CD8-positive, alpha-beta T cell (primary cell): ENCODE measurements at regions of chr22 and their contacts with region 1.

Region 1: GRCh38 chr22:30634471-30635233 is 929 bp upstream of the SLC35E4 start:
- DNase-seq: peak; percentile 75 to 95 (median 90)
- ATAC-seq: peak; percentile 64
- H3K4me3 ChIP-seq: peak overlapping the region; percentile 60 to 87
- H3K4me3 Mint-ChIP-seq: peak overlapping the region; percentile 81
- H3K27ac ChIP-seq: peak overlapping the region; percentile 32 to 89
- H3K27ac Mint-ChIP-seq: peak overlapping the region; percentile 91
- H3K4me1 ChIP-seq: peaks cover 31% of the 10 kb centered on the region
- H3K4me1 Mint-ChIP-seq: peaks cover 22% of the 10 kb centered on the region
- H3K27me3 ChIP-seq: no peaks in the 10 kb centered on the region
- H3K27me3 Mint-ChIP-seq: no peaks in the 10 kb centered on the region
- CTCF ChIP-seq: peak; percentile 80

Region 2: DNA sequence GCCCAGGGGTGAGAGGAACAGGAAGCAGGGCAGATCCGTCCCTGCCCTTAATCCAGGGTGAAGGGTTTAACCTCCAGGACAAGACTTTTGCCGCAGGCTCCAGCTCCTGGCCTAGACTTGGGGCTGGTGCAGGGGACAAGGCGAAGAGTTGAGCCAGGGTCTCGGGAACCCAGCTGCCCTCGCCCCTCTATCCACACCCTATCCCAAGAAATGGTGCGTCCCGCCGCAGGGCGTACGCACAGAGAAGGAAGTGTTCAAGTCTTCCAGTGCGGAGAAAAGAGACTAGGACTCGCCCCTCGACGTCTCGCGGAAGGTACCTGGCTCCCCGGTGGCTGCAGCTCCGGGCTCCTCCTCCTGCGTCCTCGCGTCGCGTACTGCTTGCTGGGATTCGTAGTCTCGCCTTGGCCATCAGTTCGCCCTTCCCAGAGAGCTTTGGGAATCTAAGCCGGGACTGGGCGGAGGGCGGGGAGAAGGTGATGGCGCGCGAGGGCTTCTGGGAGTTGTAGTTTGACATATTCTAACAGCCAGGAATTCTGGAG is 868.0 kb before region 1 on chr22 and contains the start of gene ZMAT5:
- CTCF ChIA-PET with region 1: no interaction called
- POLR2A ChIA-PET with region 1: no interaction called
- intact Hi-C with region 1: loop called in 1 of 2 experiments (anchors 2 kb)
- DNase-seq: peak; percentile 77 to 97 (median 92)
- ATAC-seq: peak; percentile 94
- H3K4me3 ChIP-seq: peak within 1 kb of the TSS; percentile 83 to 95
- H3K4me3 Mint-ChIP-seq: peak within 1 kb of the TSS; percentile 100
- H3K27ac ChIP-seq: peak within 1 kb of the TSS; percentile 72 to 84
- H3K27ac Mint-ChIP-seq: peak within 1 kb of the TSS; percentile 98
- H3K4me1 ChIP-seq: peaks cover 23% of the 10 kb centered on the region
- H3K4me1 Mint-ChIP-seq: peaks cover 41% of the 10 kb centered on the region
- H3K27me3 ChIP-seq: no peaks in the 10 kb centered on the region
- H3K27me3 Mint-ChIP-seq: no peaks in the 10 kb centered on the region
- CTCF ChIP-seq: no peak
- total RNA-seq, gene ZMAT5: 4.3 to 5.2 TPM

Region 3: DNA sequence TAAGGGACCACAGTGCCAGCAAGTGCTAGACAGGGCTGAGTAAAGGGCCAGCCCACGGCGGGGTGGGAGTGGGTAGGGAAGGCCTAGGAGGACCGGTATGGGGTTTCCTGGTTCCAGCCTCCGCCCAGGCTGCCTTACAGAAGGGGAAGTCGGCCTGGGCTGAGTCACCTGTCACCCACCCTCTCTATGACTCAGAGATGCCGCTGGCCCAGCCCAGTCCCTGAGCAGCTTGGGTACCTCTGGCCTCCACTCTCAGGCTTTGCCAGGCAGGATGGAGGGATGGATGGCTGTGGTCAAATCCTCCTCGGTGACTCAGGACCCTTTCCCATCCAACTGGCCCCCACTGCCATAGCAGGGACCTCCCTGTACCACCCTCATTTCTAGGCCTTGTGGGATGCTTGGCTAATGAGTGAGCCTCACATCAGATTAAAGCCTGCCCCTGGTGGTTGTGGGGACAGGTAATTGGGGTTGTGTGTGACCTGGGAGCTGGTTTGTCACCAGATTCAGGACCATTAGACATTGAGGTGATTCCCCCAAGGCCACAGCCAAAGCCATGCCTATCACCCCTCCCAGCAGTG is 14.9 kb after region 1 on chr22:
- CTCF ChIA-PET with region 1: interaction called, 8 read pairs
- POLR2A ChIA-PET with region 1: no interaction called
- intact Hi-C with region 1: loop called in 1 of 2 experiments (anchors 1 kb)
- DNase-seq: peak; percentile 12 to 77 (median 61)
- ATAC-seq: peak; percentile 92
- H3K4me3 ChIP-seq: no peak overlapping the region
- H3K4me3 Mint-ChIP-seq: no peak overlapping the region
- H3K27ac ChIP-seq: no peak overlapping the region
- H3K27ac Mint-ChIP-seq: no peak overlapping the region
- H3K4me1 ChIP-seq: no peaks in the 10 kb centered on the region
- H3K4me1 Mint-ChIP-seq: peaks cover 8% of the 10 kb centered on the region
- H3K27me3 ChIP-seq: no peaks in the 10 kb centered on the region
- H3K27me3 Mint-ChIP-seq: no peaks in the 10 kb centered on the region
- CTCF ChIP-seq: no peak

Region 4: GRCh38 chr22:30694171-30694639 is 59.6 kb after region 1 on chr22:
- CTCF ChIA-PET with region 1: interaction called, 4 read pairs
- POLR2A ChIA-PET with region 1: no interaction called
- intact Hi-C with region 1: loop called in 1 of 2 experiments (anchors 1 kb)
- DNase-seq: peak; percentile 12 to 69 (median 58)
- ATAC-seq: peak; percentile 76
- H3K4me3 ChIP-seq: peak overlapping the region; percentile 56 to 61
- H3K4me3 Mint-ChIP-seq: peak overlapping the region; percentile 91
- H3K27ac ChIP-seq: peak overlapping the region in 1 of 2 experiments; percentile 35
- H3K27ac Mint-ChIP-seq: peak overlapping the region; percentile 66
- H3K4me1 ChIP-seq: peaks cover 11% of the 10 kb centered on the region
- H3K4me1 Mint-ChIP-seq: peaks cover 16% of the 10 kb centered on the region
- H3K27me3 ChIP-seq: no peaks in the 10 kb centered on the region
- H3K27me3 Mint-ChIP-seq: peaks cover 12% of the 10 kb centered on the region
- CTCF ChIP-seq: no peak

Region 5: DNA sequence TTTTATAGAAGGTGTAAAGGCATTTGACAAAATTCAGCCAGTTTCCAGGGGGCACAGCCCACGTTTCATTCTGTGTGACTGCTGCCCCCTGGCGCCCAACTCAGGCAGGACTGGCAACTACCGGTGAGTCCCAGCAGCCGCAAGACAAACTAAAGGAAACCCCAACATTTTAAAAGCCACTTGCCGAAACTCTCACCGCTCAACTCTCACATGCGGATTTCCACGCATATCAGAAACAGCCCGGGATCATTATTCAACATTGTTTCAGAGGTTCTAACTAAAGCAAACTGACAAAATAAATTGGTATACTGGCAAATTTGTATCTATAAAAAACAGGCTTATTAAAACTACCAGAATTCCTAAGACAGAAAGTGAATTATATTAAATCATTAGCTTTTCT is 285.8 kb after region 1 on chr22:
- CTCF ChIA-PET with region 1: interaction called, 53 read pairs
- POLR2A ChIA-PET with region 1: interaction called, 3 read pairs
- intact Hi-C with region 1: loop called in 1 of 2 experiments (anchors 1 kb)
- DNase-seq: peak; percentile 66 to 91 (median 86)
- ATAC-seq: peak; percentile 77
- H3K4me3 ChIP-seq: no peak overlapping the region
- H3K4me3 Mint-ChIP-seq: peak overlapping the region; percentile 64
- H3K27ac ChIP-seq: no peak overlapping the region
- H3K27ac Mint-ChIP-seq: peak overlapping the region; percentile 55
- H3K4me1 ChIP-seq: peaks cover 26% of the 10 kb centered on the region
- H3K4me1 Mint-ChIP-seq: peaks cover 31% of the 10 kb centered on the region
- H3K27me3 ChIP-seq: no peaks in the 10 kb centered on the region
- H3K27me3 Mint-ChIP-seq: no peaks in the 10 kb centered on the region
- CTCF ChIP-seq: peak; percentile 96

Region 6: DNA sequence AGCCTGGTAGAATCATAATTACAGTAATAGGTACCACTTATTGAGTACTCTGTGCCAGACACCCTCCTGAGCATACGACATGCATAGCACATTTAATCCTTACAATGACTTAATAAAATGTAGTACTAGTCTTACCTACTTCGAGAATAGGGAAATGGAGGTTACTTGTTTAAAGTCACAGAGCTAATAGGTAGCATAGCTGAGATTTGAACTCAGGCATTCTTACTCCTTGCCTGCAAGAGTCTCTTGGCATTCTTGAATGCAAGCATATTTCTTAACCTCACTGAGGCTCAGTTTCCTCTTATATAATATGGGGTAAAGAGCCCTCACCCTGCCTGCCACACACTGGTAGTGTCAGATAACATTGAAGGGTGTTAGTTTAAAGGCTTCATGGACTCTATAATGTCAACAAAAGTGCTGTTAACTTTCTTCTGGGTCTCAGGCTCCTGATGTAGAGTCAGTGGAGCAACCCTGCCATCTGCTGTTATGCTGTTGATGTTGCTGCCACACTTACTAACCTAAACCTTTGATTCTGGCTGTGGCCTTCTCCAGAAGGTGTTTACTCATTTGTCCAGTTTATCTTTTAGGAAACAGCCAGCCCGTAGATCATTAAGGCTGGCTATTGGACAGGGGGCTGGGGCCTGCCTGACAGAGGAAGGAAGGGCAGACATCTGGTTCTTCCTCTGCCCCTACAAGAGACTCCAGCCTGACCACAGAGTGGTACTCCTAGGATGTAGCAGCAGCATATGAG is 596.4 kb after region 1 on chr22:
- CTCF ChIA-PET with region 1: interaction called, 12 read pairs
- POLR2A ChIA-PET with region 1: no interaction called
- intact Hi-C with region 1: loop called (anchors 1 to 2 kb)
- DNase-seq: peak; percentile 16 to 80 (median 56)
- ATAC-seq: peak; percentile 87
- H3K4me3 ChIP-seq: no peak overlapping the region
- H3K4me3 Mint-ChIP-seq: no peak overlapping the region
- H3K27ac ChIP-seq: peak overlapping the region in 1 of 2 experiments; percentile 40
- H3K27ac Mint-ChIP-seq: peak overlapping the region; percentile 92
- H3K4me1 ChIP-seq: peaks cover 25% of the 10 kb centered on the region
- H3K4me1 Mint-ChIP-seq: peaks cover 32% of the 10 kb centered on the region
- H3K27me3 ChIP-seq: no peaks in the 10 kb centered on the region
- H3K27me3 Mint-ChIP-seq: no peaks in the 10 kb centered on the region
- CTCF ChIP-seq: peak; percentile 69